RWPE1 (cell line): ENCODE measurements at regions of chr15 and their contacts with region 1.

Region 1: GRCh38 chr15:70806992-70807712 is 43.8 kb upstream of the UACA start:
- DNase-seq: no peak
- H3K27ac ChIP-seq: no peak overlapping the region
- CTCF ChIP-seq: no peak

Region 2: DNA sequence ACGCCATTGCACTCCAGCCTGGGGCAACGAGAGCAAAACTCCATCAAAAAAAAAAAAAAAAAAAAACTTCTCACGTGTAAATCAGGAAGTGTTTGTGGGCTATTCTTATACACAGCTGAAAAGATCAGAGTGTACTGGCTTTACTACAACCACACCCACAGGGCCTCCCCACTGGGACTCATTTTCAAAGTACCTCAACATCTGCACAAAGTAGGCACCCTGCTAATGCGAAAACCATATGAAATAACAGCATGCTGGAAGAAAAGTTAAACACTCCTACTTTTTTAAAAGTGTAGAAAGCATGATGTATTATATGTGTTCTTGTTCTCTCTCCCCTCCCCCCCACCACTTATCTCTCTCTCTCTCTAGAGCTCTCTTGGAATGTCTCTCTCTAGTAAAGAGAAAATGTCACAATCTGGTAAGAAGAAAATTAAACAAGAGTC is 54.9 kb before region 1 on chr15:
- CTCF ChIA-PET with region 1: interaction called, 3 read pairs
- POLR2A ChIA-PET with region 1: interaction called, 14 read pairs
- DNase-seq: no peak
- H3K27ac ChIP-seq: no peak overlapping the region
- CTCF ChIP-seq: no peak